ENCODE measurements at regions of chr4 and their contacts with region 1.

Region 1: DNA sequence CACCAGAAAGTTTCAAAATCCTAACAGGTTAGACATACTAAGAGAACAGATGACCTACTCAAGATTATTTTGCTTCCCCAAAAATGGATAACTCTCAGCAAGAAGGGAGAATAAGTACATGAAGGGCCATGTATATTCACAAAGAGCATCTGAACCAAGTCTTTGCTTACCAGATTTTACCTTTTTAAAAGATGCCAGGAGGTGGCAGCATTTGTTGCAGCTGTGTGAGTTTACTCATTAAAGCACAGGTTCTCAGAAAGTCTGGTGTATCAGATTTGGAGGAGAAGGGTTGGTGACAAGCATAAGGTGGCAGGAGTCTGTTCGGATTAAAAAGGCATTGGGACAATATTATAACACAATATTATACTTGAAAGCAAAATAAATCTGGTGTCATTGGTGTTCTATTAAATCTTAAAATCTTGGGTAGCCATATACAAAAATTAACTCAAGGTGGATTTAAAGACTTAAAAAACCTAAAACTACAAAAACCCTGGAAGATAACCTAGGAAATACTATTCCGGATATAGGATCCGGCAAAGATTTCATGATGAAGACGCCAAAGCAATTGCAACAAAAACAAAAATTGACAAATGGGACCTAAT is 51.3 kb upstream of the NFKB1 start:
- DNase-seq: peak in 2 of 5 donors; percentile 23 to 49
- H3K4me3 ChIP-seq: no peak overlapping the region
- H3K27ac ChIP-seq: no peak overlapping the region
- H3K4me1 ChIP-seq: no peaks in the 10 kb centered on the region
- H3K27me3 ChIP-seq: no peaks in the 10 kb centered on the region
- CTCF ChIP-seq: peak; percentile 19 to 49 (median 41)
- EP300 ChIP-seq: no peak
- POLR2A ChIP-seq: no peak

Region 2: GRCh38 chr4:101500742-101501141 is 949.1 kb before region 1 on chr4:
- intact Hi-C with region 1: no loop called
- DNase-seq: no peak
- H3K4me3 ChIP-seq: no peak overlapping the region
- H3K27ac ChIP-seq: no peak overlapping the region
- H3K4me1 ChIP-seq: no peaks in the 10 kb centered on the region
- H3K27me3 ChIP-seq: no peaks in the 10 kb centered on the region
- CTCF ChIP-seq: no peak
- EP300 ChIP-seq: no peak
- POLR2A ChIP-seq: no peak

Region 3: GRCh38 chr4:102610007-102610406 is 160.2 kb after region 1 on chr4:
- intact Hi-C with region 1: loop called in 1 of 4 experiments (anchors 10 kb)
- DNase-seq: no peak
- H3K4me3 ChIP-seq: no peak overlapping the region
- H3K27ac ChIP-seq: no peak overlapping the region
- H3K4me1 ChIP-seq: no peaks in the 10 kb centered on the region
- H3K27me3 ChIP-seq: no peaks in the 10 kb centered on the region
- CTCF ChIP-seq: no peak
- EP300 ChIP-seq: no peak
- POLR2A ChIP-seq: no peak

Region 4: GRCh38 chr4:102620697-102621497 is 171.0 kb after region 1 on chr4:
- intact Hi-C with region 1: loop called (anchors 5 to 10 kb)
- DNase-seq: no peak
- H3K4me3 ChIP-seq: no peak overlapping the region
- H3K27ac ChIP-seq: no peak overlapping the region
- H3K4me1 ChIP-seq: no peaks in the 10 kb centered on the region
- H3K27me3 ChIP-seq: no peaks in the 10 kb centered on the region
- CTCF ChIP-seq: peak in 2 of 3 donors; percentile 26 to 50
- EP300 ChIP-seq: no peak
- POLR2A ChIP-seq: no peak

Region 5: DNA sequence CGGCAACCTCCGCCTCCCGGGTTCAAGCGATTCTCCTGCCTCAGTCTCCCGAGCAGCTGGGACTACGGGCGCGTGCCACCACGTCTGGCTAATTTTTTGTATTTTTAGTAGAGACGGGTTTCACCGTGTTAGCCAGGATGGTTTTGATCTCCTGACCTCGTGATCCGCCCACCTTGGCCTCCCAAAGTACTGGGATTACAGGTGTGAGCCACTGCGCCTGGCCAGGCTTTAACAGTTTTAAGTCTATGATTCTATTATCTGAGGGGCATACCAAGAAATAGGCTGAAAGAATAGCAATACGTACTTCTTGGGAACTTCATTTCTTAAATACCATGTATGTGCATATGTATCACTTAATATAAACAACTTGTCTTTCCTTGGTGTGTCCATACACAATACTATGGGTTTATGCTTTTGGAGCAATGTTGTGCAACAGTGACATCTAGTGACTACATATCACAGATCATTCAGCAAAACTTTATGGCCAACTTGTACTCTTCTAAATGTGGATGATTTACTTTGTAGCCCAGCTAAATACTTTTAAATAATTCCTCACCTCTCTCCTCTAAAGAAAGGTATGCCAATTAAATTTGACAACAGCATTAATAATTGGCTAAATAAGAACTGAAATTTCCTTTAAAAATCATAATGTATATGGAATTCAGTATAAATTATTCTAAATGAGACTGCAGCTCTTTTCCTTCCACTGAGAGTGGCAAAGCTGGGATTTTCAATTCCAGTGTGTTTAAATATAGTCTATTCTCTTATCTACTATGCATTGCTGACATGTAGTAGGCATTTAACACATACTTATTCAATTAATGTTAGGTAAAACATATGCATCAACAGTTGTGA is 559.2 kb after region 1 on chr4:
- intact Hi-C with region 1: loop called (anchors 5 to 10 kb)
- DNase-seq: no peak
- H3K4me3 ChIP-seq: no peak overlapping the region
- H3K27ac ChIP-seq: no peak overlapping the region
- H3K4me1 ChIP-seq: peaks cover 5% of the 10 kb centered on the region
- H3K27me3 ChIP-seq: no peaks in the 10 kb centered on the region
- CTCF ChIP-seq: peak; percentile 29 to 55 (median 50)
- EP300 ChIP-seq: no peak
- POLR2A ChIP-seq: no peak

Region 6: DNA sequence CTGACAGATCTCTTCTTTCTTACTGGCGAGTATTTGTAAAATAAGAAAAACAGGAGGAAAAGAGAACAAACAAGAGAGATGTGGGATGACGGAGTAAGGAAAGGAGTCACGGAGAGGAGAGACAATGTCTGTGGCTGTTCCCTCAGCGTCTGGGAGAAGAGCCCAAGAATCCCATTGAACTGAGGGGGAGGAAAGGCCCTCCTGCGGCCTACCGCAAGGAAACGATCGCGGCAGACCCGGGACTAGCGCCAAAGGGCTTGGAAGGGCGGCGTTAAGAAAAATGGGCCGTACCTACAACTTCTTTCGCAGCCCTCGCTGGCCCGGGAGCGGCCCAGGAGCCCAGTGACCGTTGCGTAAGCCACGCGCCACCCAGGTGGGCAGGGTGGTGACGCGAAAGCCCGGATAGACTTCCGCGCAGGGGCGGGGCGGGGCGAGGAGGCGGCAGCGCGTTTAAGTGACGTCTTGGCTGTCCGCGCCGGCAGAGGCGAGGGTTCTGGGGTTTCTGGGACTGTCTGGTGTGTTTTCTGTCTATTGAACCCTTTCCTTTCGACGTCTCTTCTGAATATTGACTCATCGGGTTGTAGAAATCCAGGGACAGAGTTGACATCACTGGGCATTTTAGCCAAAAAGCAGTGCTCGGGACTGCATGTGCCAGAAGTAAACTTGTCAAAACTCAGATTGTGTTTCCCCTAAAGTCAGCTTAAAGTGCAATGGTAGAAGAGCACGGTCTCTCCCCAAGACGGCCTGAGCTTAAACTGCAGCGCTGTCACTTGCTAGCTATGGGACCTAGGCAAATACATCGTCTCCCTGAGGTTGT is 569.7 kb after region 1 on chr4 and contains the start of gene SLC9B1:
- intact Hi-C with region 1: loop called in 3 of 4 experiments (anchors 10 kb)
- DNase-seq: peak; percentile 97 to 98 (median 97)
- H3K4me3 ChIP-seq: peak within 1 kb of the TSS; percentile 50
- H3K27ac ChIP-seq: peak within 1 kb of the TSS; percentile 71 to 90
- H3K4me1 ChIP-seq: peaks cover 2% of the 10 kb centered on the region
- H3K27me3 ChIP-seq: no peaks in the 10 kb centered on the region
- CTCF ChIP-seq: peak in 1 of 3 donors; percentile 15
- EP300 ChIP-seq: peak; percentile 89
- POLR2A ChIP-seq: peak; percentile 94
- total RNA-seq, gene SLC9B1: 0.83 to 3.8 (median 2.5) TPM

Measured in ovary (tissue), 10 donors.